ENCODE measurements at regions of chr19 and their contacts with region 1.

Region 1: GRCh38 chr19:15038297-15038696 is 11.0 kb upstream of the CASP14 start:
- DNase-seq: peak; percentile 75 to 98
- H3K4me3 ChIP-seq: peak overlapping the region; percentile 22; the same call in 1 of the 2 replicates
- H3K27ac ChIP-seq: peak overlapping the region; percentile 81
- H3K4me1 ChIP-seq: peaks cover 58% of the 10 kb centered on the region
- H3K27me3 ChIP-seq: no peaks in the 10 kb centered on the region
- CTCF ChIP-seq: no peak

Region 2: GRCh38 chr19:14968247-14968646 is 70.0 kb before region 1 on chr19:
- CTCF ChIA-PET with region 1: no interaction called
- POLR2A ChIA-PET with region 1: no interaction called
- intact Hi-C with region 1: no loop called
- DNase-seq: no peak
- H3K4me3 ChIP-seq: no peak overlapping the region
- H3K27ac ChIP-seq: no peak overlapping the region
- H3K4me1 ChIP-seq: no peaks in the 10 kb centered on the region
- H3K27me3 ChIP-seq: no peaks in the 10 kb centered on the region
- CTCF ChIP-seq: no peak

Region 3: GRCh38 chr19:14979476-14980255 is 58.6 kb before region 1 on chr19 and contains the start of gene SLC1A6:
- CTCF ChIA-PET with region 1: no interaction called
- POLR2A ChIA-PET with region 1: no interaction called
- intact Hi-C with region 1: no loop called
- DNase-seq: no peak
- H3K4me3 ChIP-seq: peak within 1 kb of the TSS; percentile 50
- H3K27ac ChIP-seq: no peak within 1 kb of the TSS
- H3K4me1 ChIP-seq: no peaks in the 10 kb centered on the region
- H3K27me3 ChIP-seq: no peaks in the 10 kb centered on the region
- CTCF ChIP-seq: no peak
- total RNA-seq, gene SLC1A6: 1.5 and 2.9 TPM in 2 replicates

Region 4: GRCh38 chr19:15015946-15016542 is 22.3 kb before region 1 on chr19:
- CTCF ChIA-PET with region 1: no interaction called
- POLR2A ChIA-PET with region 1: no interaction called
- intact Hi-C with region 1: no loop called
- DNase-seq: peak; percentile 19 to 49
- H3K4me3 ChIP-seq: no peak overlapping the region
- H3K27ac ChIP-seq: no peak overlapping the region
- H3K4me1 ChIP-seq: no peaks in the 10 kb centered on the region
- H3K27me3 ChIP-seq: 0 out of 2 replicates have a peak, but pooled peaks cover 3% of the 10 kb centered on the region
- CTCF ChIP-seq: no peak

Region 5: GRCh38 chr19:15048885-15049572 is 10.7 kb after region 1 on chr19 and contains the start of gene CASP14:
- CTCF ChIA-PET with region 1: no interaction called
- POLR2A ChIA-PET with region 1: no interaction called
- intact Hi-C with region 1: no loop called
- DNase-seq: peak; percentile 23 to 92
- H3K4me3 ChIP-seq: peak within 1 kb of the TSS; percentile 57
- H3K27ac ChIP-seq: peak within 1 kb of the TSS; percentile 15; the same call in 1 of the 2 replicates
- H3K4me1 ChIP-seq: peaks cover 28% of the 10 kb centered on the region
- H3K27me3 ChIP-seq: no peaks in the 10 kb centered on the region
- CTCF ChIP-seq: no peak
- total RNA-seq, gene CASP14: 0.58 and 1.9 TPM in 2 replicates

Region 6: DNA sequence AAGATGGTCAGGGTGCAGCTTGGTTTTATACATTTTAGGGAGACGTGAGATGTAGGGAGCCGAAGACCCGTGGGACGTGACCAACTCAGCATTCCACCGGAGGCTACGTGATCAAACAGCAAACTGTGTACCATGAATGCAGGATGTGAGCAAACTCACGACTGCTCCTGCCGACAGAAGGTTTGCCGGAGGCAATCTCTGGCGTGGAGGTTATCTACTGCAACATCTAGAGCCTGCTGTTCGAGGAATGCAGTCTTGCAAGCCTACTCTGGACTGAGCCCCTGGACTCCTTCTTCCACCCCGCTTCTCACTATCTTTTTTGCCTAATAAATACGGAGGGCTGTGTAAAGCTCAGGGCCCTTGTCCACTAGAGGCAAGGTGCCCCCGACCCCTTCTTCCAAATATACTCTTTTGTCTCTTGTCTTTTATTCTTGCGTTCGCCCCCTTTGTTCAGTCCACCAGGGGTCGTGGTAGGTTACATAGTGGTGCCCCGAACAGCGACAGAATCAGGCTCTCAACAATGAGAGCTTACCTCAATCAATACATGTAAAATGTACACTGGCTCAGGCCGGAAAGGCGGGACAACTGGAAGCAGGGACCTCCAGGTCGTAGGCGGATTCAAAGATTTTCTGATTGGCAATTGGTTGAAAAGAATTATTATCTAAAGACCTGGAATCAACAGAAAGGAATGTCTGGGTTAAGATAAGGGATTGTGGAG is 34.8 kb after region 1 on chr19:
- CTCF ChIA-PET with region 1: interaction called, 5 read pairs
- POLR2A ChIA-PET with region 1: no interaction called
- intact Hi-C with region 1: loop called (anchors 1 kb)
- DNase-seq: peak; percentile 90 to 99
- H3K4me3 ChIP-seq: peak overlapping the region; percentile 47; the same call in 1 of the 2 replicates
- H3K27ac ChIP-seq: peak overlapping the region; percentile 96
- H3K4me1 ChIP-seq: peaks cover 86% of the 10 kb centered on the region
- H3K27me3 ChIP-seq: no peaks in the 10 kb centered on the region
- CTCF ChIP-seq: peak; percentile 64

Region 7: DNA sequence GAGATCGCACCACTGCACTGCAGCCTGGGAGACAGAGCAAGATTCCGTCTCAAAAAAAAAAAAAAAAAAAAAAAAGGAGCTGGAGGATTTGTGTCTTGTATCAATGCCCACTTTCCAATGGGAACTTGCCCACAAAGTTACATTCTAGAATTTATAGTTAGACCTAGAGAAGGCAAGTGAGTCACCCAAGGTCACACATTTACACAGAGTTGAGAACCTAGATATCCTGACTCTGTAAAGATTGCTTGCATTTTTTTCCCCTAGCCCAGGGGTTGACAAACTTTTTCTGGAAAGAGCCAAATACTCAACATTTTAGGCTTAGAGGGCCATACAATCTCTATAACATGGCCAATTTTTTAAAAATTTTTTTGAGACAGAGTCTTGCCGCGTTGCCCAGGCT is 301.8 kb after region 1 on chr19:
- CTCF ChIA-PET with region 1: interaction called, 14 read pairs
- POLR2A ChIA-PET with region 1: no interaction called
- intact Hi-C with region 1: no loop called
- DNase-seq: no peak
- H3K4me3 ChIP-seq: no peak overlapping the region
- H3K27ac ChIP-seq: no peak overlapping the region
- H3K4me1 ChIP-seq: no peaks in the 10 kb centered on the region
- H3K27me3 ChIP-seq: no peaks in the 10 kb centered on the region
- CTCF ChIP-seq: no peak